Cardiac septum (tissue), 1 donor: ENCODE measurements at regions of chr4 and their contacts with region 1.

Region 1: DNA sequence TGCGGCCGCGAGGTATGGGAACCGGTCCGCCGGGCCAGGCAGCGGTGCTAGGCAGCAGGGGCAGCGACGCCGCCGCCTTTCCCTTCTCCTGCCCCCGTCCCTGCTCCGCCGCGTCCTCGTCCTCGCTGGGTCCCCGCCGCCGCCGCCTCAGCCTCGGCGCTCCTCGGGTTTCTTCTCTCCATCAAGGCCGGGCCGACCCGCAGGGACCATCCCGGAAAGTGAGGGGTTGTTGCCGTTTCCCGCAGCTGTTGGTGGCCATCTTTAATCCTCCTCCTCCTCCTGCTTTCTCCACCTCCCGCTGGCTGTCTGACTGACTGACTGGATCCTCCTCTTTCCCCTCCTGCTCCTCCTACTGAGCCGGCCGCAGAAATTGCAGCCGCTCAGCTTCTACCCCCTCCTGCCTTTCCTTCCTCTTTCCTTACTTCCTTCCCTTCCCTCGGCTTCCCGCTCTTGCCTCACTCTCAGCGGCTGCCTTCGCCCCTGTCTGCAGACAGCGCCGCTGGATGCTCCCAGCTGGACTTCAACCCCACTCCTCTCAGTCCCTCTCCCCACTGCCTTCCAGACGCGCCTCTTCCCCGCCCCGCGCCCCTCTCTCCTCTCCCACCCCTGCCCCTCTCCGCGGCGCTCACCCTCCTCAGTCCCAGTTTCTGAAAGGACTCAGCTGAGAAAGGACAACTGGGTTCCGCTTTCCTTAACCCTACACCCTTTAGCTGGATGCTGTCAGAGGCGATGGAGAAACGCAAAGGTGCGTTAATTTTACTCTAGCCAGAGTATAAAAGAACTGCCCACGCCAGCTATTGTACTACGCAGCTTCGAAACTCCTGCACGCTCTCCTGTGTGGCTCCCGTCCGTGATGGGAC is at the start of gene WDFY3:
- DNase-seq: peak; percentile 93
- total RNA-seq, gene WDFY3: 60.9 TPM

Region 2: DNA sequence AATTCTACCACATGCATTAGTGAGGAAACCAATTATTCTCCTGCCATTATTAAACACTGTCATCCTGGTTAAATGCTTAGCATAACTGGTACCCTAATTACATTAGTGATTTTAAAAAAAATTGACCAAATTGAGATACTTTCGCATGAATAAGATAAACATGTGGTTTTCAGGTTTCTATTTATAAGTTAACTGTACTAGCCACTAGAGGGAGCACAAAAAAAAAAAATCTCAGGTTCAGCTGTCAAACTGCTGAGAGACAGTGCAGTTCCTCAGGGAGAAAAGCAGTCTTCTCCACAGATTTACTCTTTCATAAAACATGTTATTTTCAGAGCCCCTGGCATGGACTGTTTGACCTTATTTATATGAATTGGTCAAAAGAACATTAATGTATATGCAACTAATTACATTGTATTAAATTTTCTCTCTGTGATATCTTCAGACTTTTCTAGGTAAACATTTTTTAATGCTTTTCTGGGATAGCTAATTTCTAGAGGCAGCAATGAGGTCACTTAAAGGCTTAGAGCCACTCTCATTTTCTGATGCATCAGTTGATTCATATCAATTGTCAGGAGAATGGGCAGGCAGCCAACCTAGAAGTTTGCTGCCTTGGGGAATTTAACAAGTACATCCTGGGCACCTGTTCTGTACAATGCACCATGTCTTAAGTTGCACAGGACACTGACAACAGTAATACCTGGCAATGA is 216.2 kb before region 1 on chr4:
- intact Hi-C with region 1: loop called (anchors 2 kb)
- DNase-seq: no peak

Region 3: DNA sequence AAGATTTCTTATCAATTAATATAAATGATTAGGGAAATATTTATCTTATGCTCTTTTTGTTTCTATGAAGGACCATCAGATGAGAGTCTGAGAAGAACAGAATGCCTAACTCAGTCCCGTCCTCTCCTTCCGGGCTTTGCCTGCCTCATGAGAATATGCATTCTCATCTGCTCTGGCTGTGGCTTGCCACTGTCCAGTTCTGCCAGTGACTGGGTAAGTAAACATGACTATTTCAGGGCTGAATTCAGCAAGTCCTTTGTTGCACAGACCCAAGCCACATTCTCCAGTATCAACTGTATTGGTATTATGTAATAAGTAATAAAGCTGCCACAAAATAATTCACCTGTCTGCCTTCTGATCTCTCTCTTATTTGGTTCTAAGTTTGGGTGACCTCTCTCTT is 110.8 kb before region 1 on chr4:
- intact Hi-C with region 1: loop called (anchors 5 kb)
- DNase-seq: no peak

Region 4: GRCh38 chr4:84894610-84895009 is 72.0 kb before region 1 on chr4:
- intact Hi-C with region 1: no loop called
- DNase-seq: no peak